Adrenal gland (tissue), 19 donors: ENCODE measurements at regions of chr2 and their contacts with region 1.

Region 1: DNA sequence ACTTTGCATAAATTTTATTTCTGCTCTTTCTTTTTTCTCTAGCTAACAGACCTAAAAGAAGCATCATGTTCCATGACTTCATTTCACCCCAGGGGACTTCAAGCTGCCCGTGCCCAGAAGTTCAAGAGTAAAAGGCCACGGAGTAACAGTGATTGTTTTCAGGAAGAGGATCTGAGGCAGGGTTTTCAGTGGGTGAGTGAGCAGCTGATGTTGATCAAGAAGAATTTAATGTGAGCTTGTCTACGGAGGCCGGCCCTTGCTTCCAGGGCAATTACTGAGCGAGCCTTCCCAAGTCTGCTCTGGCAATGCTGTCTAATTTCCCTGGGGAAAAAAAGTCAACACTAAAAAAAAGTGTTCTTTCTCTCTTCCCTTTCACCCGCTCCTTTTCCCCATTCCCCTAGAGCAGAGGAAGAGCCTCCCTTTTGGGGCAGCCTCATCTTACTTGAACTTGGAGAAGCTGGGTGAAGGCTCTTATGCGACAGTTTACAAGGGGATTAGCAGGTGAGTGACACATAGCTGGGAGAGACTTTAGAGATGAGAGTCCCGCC is 1.2 kb downstream of the CDK15 start:
- DNase-seq: peak in 6 of 7 donors; percentile 10 to 64 (median 32)
- H3K4me3 ChIP-seq: no peak overlapping the region
- H3K27ac ChIP-seq: peak overlapping the region in 2 of 5 donors; percentile 25 to 56
- H3K4me1 ChIP-seq: peaks cover 0 to 15% of the 10 kb centered on the region in 2 donors
- H3K27me3 ChIP-seq: no peaks in the 10 kb centered on the region
- CTCF ChIP-seq: no peak
- POLR2A ChIP-seq: no peak

Region 2: DNA sequence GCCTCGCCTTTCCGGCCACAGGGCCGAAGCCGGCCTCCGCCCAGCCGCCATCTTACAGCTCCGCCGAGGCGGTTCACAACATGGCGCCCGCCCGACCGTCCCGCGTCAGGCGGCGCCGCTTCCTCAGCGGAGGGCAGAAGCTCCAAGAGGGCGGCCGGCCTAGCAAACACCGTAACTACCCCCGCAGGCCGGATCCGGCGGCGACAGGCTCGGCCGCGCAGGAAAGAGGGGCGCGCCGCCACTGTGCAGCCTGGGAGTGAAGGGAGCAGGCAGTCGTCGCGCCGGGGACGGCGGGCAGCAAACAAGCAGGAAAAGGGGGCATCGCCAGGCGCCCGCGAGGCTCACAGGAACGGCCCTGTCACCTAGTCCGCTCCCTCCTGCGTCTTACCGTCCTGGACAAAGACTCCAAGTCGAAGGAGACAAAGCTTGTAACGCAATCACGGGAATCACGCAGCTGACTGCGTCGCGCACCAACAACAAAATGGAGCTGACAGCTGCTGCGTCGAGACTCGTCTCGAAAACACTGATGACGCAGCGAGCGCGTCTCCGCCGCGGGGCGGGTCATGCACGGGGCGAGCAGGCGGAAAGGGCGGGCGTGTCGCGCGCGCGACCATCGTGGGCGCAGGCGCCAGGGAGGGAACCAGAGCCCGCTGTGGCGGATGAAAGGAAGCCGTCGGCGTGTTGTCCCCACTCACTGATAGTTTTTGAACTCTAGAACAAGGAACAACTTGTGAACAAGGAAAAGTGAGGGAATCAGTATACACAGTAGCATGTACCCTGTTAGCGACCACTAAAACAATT is 943.1 kb before region 1 on chr2 and contains the start of gene CLK1:
- intact Hi-C with region 1: no loop called
- DNase-seq: peak; percentile 96 to 99 (median 97)
- H3K4me3 ChIP-seq: peak within 1 kb of the TSS; percentile 62 to 95 (median 88)
- H3K27ac ChIP-seq: peak within 1 kb of the TSS; percentile 99 to 100 (median 100)
- H3K4me1 ChIP-seq: peaks cover 34 to 47% of the 10 kb centered on the region in 2 donors
- H3K27me3 ChIP-seq: no peaks in the 10 kb centered on the region
- CTCF ChIP-seq: peak in 1 of 6 experiments; percentile 7
- POLR2A ChIP-seq: peak; percentile 98 to 100
- total RNA-seq, gene CLK1: 34.4 to 151 (median 81.6) TPM

Region 3: GRCh38 chr2:201280191-201281040 is 527.1 kb before region 1 on chr2:
- intact Hi-C with region 1: no loop called
- DNase-seq: no peak
- H3K4me3 ChIP-seq: no peak overlapping the region
- H3K27ac ChIP-seq: no peak overlapping the region
- H3K4me1 ChIP-seq: no peaks in the 10 kb centered on the region
- H3K27me3 ChIP-seq: no peaks in the 10 kb centered on the region
- CTCF ChIP-seq: no peak
- POLR2A ChIP-seq: no peak

Region 4: DNA sequence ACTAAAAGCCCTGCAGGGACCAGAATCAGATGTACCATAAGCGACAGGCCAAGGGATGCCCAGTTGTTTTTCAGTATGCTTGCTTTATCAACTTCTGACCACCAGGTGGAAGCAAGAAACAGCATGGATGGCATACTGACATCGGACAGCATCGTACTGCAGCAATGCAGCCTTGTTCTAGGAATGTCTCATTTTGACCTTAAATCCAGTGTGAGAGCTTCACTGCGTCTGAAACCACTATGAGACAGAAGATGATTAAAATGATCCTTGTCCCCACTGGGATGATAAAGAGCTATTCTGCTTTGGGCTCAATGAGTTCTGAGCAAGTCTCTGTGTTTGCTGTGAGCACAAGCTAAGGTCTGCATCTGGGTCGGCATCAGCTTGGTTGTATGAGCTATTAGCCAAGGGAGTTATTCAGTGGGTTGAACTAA is 53.1 kb after region 1 on chr2:
- intact Hi-C with region 1: loop called in 1 of 2 experiments (anchors 10 kb)
- DNase-seq: peak; percentile 47 to 76 (median 60)
- H3K4me3 ChIP-seq: no peak overlapping the region
- H3K27ac ChIP-seq: no peak overlapping the region
- H3K4me1 ChIP-seq: peaks cover 0 to 9% of the 10 kb centered on the region in 2 donors
- H3K27me3 ChIP-seq: no peaks in the 10 kb centered on the region
- CTCF ChIP-seq: peak; percentile 68 to 87 (median 82)
- POLR2A ChIP-seq: no peak

Region 5: DNA sequence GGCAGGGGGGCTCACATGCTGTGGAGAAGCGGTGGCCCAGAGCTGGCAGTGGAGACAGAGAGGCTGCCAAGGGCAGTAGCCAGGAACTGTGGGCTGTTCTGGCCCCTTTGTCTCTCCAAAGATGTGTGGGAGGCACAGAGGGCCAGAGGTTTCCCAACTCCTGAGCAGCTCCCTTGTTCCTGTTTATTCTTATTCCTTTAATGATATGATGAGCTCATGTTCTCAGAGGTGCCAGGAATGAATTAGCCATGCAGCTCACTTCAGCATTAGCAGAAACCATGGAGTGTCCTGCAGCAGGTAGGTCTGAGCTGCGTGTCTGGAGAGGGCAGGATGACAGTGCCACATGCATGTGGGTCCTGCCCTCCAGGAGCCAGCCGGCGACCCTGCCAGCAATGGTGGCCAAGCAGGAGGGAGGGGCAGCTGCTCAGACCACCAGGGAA is 148.2 kb after region 1 on chr2:
- intact Hi-C with region 1: no loop called
- DNase-seq: peak in 1 of 7 donors; percentile 16
- H3K4me3 ChIP-seq: no peak overlapping the region
- H3K27ac ChIP-seq: no peak overlapping the region
- H3K4me1 ChIP-seq: no peaks in the 10 kb centered on the region
- H3K27me3 ChIP-seq: no peaks in the 10 kb centered on the region
- CTCF ChIP-seq: no peak
- POLR2A ChIP-seq: no peak